Left ventricle myocardium superior (tissue), 1 donor: ENCODE measurements at regions of chr7 and their contacts with region 1.

Region 1: DNA sequence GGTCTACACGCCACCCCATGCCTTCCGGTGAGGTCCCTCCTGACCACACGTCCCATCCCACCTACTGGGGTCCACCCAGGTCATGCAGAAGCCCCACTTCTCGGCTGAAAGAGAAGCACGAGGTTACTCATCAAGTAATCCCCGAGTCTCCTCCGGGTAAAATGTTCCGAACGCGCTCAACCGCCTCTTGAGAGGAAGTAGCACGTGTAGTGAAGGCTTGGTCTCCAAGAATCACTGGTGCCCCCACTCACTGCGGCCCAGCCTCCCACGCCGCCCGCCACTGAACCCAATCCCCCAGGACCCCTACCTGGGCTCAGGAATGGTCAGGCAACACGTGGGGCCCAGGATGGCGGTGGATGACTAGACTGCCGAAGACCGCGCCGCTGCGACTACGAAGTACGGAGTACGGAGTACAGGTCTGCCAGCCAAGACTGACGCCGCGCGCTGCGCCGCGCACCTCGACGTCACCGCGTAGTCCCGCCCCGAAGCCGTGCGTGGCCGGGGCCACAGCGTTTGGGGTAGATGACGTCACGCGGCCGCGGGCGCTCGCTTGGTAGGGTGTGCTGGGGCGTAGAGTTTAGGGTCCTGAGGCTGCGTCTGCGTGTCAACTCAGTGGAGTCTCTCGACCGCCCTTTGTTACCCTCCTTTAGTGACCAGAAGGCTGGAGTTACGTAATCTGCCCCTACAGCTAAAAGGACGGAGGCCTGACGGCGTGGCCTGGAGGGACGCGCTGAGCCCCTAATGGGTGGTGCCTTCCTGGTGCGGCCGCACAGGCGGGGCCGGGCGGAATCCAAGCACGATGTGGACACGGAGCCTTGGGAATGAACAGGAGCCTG is 7.6 kb upstream of the MYO1G start:
- DNase-seq: peak; percentile 98
- ATAC-seq: peak; percentile 99

Region 2: GRCh38 chr7:43105521-43106120 is 1880.8 kb before region 1 on chr7:
- intact Hi-C with region 1: no loop called
- DNase-seq: no peak
- ATAC-seq: no peak

Region 3: DNA sequence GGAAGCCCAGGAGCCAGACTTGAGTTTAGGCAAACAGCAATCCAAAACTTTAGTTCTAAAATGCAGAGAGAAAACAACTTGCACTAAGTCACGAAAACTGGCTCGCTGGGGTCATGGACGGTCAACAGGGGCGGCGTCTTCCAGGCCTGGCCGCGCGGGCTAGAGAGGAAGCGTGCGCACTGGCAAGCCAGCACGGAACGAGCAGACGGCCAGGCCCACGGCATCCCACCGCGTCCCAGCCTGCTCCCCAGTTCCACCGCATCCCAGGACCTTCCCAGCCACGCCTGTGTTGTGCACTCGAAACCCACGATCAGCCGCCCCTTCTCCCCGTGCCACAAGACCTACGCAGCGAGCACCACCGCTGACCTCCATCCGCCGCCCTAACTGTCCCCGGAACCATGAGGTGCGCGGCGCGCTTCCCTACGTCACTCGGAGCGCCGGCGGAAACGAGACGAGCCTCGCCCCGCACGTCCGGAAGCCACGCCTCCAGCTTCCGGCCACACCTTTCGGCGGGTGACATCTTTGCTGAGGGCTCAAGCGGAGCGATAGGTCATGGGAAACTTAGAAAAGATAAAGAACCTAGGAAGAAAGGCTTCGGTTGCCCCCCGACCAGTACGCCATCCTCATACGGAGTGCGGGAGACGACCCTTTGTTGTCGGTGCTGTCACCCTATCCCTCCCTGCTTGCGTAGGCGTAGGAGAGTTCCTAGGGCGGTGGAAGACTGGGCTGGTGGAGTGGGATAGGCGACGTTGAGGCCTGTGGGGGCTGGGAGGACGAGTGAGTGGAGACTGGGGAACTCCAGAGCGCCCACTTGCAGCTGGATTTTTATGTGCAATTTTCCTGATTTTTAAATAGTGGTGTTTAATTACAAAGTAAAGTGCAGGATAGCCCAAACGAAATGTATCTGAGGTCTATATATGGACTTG is 125.1 kb after region 1 on chr7 and contains the start of gene TBRG4:
- intact Hi-C with region 1: loop called (anchors 10 kb)
- DNase-seq: peak; percentile 98
- ATAC-seq: peak; percentile 99
- total RNA-seq, gene TBRG4: 83.0 TPM